ENCODE measurements at regions of chr3 and their contacts with region 1.

Region 1: GRCh38 chr3:79361748-79362378 is 405.9 kb downstream of the ROBO1 start:
- DNase-seq: peak; percentile 10
- ATAC-seq: 0 out of 2 replicates have a peak, but pooled peaks have one; percentile 69
- H3K4me3 ChIP-seq: no peak overlapping the region
- H3K27ac ChIP-seq: no peak overlapping the region
- H3K4me1 ChIP-seq: no peaks in the 10 kb centered on the region; the same call in 1 of the 2 replicates
- H3K27me3 ChIP-seq: no peaks in the 10 kb centered on the region; the same call in 1 of the 2 replicates
- CTCF ChIP-seq: peak; percentile 65; the same call in 1 of the 2 replicates

Region 2: DNA sequence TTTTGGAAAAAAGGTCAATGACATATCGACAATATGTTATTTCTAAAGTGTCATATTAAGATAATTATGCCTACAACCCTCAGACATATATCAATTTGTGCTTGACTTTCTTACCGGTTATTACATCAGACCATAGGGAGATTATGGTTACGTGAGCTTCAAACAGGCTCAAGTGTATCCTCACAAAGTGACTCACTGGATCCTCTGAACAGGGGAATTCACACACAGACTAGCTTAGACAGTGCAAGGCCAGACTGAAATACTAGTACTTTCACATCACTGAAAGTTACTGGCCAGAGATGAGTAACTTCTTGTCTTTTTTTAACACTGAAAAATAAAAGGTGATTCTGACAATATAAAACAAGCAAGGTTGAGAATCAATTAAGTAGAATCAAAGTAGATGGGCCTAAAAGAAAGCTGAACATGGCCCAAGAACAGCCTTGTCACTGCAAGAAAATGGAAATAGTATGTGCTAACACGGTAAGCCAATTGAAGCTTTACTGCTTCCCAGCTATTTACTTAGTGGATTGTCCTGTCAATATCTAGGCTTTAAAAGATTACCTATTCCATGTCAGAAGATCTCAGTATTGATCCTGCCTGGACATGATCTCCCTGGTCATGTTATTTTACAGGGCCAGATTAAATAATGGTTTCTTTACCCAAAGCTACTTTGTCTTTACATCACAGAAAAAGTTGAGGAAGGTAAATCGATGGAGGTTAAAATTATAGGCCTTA is 442.7 kb before region 1 on chr3:
- CTCF ChIA-PET with region 1: no interaction called
- POLR2A ChIA-PET with region 1: interaction called, 17 read pairs
- in situ Hi-C with region 1: no loop called
- intact Hi-C with region 1: no loop called
- DNase-seq: no peak
- ATAC-seq: peak; percentile 84
- H3K4me3 ChIP-seq: no peak overlapping the region
- H3K27ac ChIP-seq: peak overlapping the region; percentile 75; the same call in 1 of the 2 replicates
- H3K4me1 ChIP-seq: peaks cover 9% of the 10 kb centered on the region
- H3K27me3 ChIP-seq: no peaks in the 10 kb centered on the region
- CTCF ChIP-seq: no peak

Region 3: GRCh38 chr3:79086514-79086913 is 275.3 kb before region 1 on chr3:
- CTCF ChIA-PET with region 1: interaction called, 21 read pairs
- POLR2A ChIA-PET with region 1: no interaction called
- in situ Hi-C with region 1: no loop called
- intact Hi-C with region 1: loop called (anchors 2 kb)
- DNase-seq: peak; percentile 32
- ATAC-seq: no peak; the same call in 1 of the 2 replicates
- H3K4me3 ChIP-seq: no peak overlapping the region
- H3K27ac ChIP-seq: no peak overlapping the region
- H3K4me1 ChIP-seq: no peaks in the 10 kb centered on the region
- H3K27me3 ChIP-seq: no peaks in the 10 kb centered on the region
- CTCF ChIP-seq: peak; percentile 79

Measured in Panc1 (cell line).